Activated CD4-positive, alpha-beta memory T cell treated with anti-CD3 and anti-CD28 coated beads, Interleukin-2, amount 10 ng/mL, durations not matched to agents 7 days and 5 days (primary cell): ENCODE measurements at regions of chr5 and their contacts with region 1.

Region 1: DNA sequence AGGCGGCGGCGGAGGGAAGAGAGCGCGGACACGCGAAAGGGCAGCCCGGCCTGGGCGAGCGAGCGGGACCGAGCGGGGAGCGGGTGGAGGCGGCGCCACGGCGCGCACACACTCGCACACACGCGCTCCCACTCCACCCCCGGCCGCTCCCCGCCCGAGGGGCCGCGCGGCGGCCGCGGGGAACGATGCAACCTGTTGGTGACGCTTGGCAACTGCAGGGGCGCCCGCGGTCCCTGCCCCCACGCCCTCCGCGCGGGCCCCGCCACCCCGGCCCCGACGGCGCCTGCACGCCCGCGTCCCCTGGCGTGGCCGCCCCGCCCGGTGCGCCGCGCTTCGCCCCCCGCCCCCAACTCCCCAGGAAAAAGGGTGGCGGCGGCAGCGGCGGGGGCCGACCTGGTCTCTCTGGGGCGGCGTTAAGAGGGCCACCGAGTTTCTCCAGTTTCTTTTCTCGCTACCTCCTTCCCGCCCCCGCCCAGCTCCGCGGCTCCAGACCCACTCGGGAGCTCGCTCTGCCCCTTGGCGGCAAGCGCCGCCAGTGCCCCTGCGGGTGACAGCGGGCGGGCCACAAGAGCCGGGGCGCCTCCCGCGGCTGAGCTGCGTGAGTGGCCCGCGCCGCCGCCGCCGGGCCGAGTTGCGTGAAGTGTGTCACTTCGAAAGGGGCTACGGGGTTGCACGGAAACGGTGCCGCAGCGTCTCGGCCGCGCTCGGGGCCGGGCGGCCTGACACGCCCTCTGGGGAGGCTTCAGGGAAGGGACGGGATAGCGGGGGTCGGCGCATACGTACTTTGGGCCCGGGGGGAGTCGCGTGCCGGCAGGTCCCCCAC is at the start of gene NR3C1:
- DNase-seq: peak; percentile 87
- H3K4me3 Mint-ChIP-seq: peak within 1 kb of the TSS; percentile 78
- H3K27ac Mint-ChIP-seq: peak within 1 kb of the TSS; percentile 97
- H3K4me1 Mint-ChIP-seq: peaks cover 56% of the 10 kb centered on the region
- H3K27me3 Mint-ChIP-seq: no peaks in the 10 kb centered on the region
- total RNA-seq, gene NR3C1: 79.3 to 81.6 TPM

Region 2: DNA sequence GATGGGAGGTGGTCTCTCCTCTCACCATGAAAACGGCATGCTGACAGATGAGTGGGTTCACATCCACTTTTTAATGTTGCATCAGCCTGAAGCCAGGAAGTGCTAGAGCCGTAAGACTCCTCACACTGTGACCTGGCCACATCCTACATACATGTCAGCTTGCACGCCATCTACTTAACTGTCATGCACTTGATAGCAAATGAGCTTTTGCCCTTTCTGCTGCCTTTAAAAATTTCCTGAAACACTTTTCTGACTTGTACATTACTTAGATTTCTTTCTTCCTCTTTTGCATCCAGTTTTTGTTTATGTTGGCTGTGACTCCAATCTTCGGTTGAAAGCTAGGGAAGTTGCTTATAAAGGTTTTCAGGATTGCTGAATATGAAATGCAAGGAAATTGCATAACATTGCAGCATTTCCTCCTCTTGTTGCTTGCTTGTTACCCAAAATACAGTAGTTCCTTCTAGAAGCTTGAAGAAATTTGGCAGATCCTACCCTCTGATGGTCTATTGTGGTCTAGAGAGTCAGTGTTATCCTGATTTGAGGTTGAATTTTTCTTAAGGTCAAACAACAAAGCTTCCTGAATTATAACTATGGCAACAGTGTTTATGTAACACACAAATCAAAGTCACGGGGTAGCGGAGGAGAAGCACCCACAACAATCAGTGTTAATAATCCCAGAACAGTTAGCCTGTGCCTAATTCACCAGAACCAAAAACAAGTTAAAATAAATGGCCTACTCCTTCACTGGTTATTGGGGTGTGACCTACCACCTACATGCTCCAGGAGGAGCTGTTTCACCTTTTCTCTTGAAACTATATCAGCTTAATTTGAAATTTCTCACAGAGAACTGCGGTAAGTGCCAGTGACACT is 401.1 kb before region 1 on chr5:
- CTCF ChIA-PET with region 1: interaction called, 57 read pairs
- POLR2A ChIA-PET with region 1: interaction called, 80 read pairs
- DNase-seq: peak; percentile 81
- H3K4me3 Mint-ChIP-seq: peak overlapping the region; percentile 41
- H3K27ac Mint-ChIP-seq: peak overlapping the region; percentile 99
- H3K4me1 Mint-ChIP-seq: peaks cover 76% of the 10 kb centered on the region
- H3K27me3 Mint-ChIP-seq: no peaks in the 10 kb centered on the region

Region 3: DNA sequence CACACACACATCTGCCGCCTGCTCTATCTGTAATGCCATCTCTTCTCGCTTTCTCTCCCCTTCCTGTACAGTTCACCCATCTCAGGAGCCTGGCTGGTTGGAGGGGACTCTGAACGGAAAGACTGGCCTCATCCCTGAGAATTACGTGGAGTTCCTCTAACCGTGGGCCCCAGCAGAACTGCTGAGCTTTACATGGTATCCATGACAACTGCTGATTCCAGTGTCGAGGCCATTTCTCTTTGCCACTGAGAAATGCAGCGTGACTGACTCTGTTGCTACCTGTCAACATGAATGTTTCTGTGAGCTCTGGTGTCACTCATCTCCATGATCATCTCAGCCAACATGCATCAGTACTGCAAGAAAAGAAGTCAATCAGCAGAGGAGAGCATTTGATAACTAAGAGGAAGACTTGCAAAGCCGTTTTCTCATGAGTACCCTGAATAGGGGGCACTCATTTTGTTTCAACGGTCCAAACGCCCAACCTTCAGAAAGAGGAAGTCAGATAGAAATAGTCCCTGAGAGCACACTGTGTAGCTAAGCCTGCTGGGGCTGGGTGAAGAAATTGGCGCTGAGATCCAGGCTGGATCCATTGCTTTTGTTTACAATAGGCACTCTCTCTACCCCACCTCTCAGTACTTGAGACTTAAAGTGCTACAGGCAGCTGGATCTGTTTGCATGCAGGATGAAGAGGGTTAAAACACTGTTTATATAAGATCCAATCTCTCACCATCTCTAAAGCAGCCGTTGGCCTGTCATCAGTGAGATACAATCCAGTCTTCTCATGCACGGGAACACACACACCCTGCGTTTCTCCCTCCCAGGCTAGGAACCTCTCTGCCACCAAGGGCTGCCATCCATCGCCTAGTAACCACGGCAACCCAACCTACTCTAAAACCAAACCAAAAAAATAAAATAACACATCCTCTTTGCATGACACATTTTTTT is 181.2 kb before region 1 on chr5:
- CTCF ChIA-PET with region 1: interaction called, 4 read pairs
- POLR2A ChIA-PET with region 1: interaction called, 17 read pairs
- DNase-seq: peak; percentile 72
- H3K4me3 Mint-ChIP-seq: peak overlapping the region; percentile 27
- H3K27ac Mint-ChIP-seq: peak overlapping the region; percentile 83
- H3K4me1 Mint-ChIP-seq: peaks cover 60% of the 10 kb centered on the region
- H3K27me3 Mint-ChIP-seq: no peaks in the 10 kb centered on the region

Region 4: GRCh38 chr5:143345671-143346440 is 57.9 kb before region 1 on chr5:
- CTCF ChIA-PET with region 1: no interaction called
- POLR2A ChIA-PET with region 1: no interaction called
- DNase-seq: no peak
- H3K4me3 Mint-ChIP-seq: no peak overlapping the region
- H3K27ac Mint-ChIP-seq: no peak overlapping the region
- H3K4me1 Mint-ChIP-seq: peaks cover 28% of the 10 kb centered on the region
- H3K27me3 Mint-ChIP-seq: no peaks in the 10 kb centered on the region

Region 5: DNA sequence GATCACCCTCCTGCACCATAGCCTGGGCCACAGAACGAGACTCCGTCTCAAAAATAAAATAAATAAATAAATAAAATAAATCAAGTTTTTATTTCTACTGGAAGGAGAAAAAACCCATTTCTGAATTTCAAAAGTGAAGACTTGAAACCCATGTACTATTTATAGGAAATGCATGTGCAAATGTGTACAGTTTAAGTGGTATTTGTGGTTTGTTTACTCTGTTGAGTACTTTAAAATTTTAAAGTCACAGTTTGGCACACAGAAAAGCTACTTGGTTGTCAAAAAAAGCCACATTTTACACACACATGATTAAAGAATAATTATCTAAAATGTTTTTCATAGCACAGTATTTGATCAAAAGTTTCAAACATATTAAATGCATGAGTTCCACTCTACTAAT is 43.9 kb before region 1 on chr5:
- CTCF ChIA-PET with region 1: interaction called, 6 read pairs
- POLR2A ChIA-PET with region 1: interaction called, 13 read pairs
- DNase-seq: no peak
- H3K4me3 Mint-ChIP-seq: no peak overlapping the region
- H3K27ac Mint-ChIP-seq: no peak overlapping the region
- H3K4me1 Mint-ChIP-seq: peaks cover 37% of the 10 kb centered on the region
- H3K27me3 Mint-ChIP-seq: no peaks in the 10 kb centered on the region

Region 6: GRCh38 chr5:143435210-143435657 is 31.4 kb after region 1 on chr5:
- CTCF ChIA-PET with region 1: interaction called, 11 read pairs
- POLR2A ChIA-PET with region 1: interaction called, 35 read pairs
- DNase-seq: peak; percentile 33
- H3K4me3 Mint-ChIP-seq: peak overlapping the region; percentile 77
- H3K27ac Mint-ChIP-seq: peak overlapping the region; percentile 70
- H3K4me1 Mint-ChIP-seq: peaks cover 52% of the 10 kb centered on the region
- H3K27me3 Mint-ChIP-seq: peaks cover 2% of the 10 kb centered on the region

Region 7: GRCh38 chr5:143824851-143825720 is 421.3 kb after region 1 on chr5:
- CTCF ChIA-PET with region 1: interaction called, 17 read pairs
- POLR2A ChIA-PET with region 1: interaction called, 13 read pairs
- DNase-seq: peak; percentile 86
- H3K4me3 Mint-ChIP-seq: no peak overlapping the region
- H3K27ac Mint-ChIP-seq: no peak overlapping the region
- H3K4me1 Mint-ChIP-seq: peaks cover 20% of the 10 kb centered on the region
- H3K27me3 Mint-ChIP-seq: peaks cover 2% of the 10 kb centered on the region

Region 8: DNA sequence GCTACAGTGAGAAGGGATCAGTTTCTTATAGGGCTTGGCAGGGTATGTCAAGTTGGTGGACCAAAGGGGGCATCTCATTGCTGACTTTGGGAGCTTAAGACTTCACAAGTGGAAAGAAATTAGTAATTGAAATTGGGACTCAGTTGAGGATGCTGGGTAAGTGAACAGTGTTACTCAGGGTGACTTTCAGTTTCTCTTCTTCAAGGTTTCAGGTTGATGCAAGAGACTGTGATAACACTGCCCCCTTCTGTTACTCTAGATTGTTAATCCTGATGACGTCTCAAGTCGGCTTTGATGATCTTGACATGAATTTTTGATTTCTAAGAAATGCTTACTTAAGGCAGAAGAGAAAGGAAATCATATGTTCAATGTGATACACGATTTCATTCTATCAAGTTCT is 788.2 kb after region 1 on chr5:
- CTCF ChIA-PET with region 1: interaction called, 5 read pairs
- POLR2A ChIA-PET with region 1: interaction called, 14 read pairs
- DNase-seq: peak; percentile 28
- H3K4me3 Mint-ChIP-seq: no peak overlapping the region
- H3K27ac Mint-ChIP-seq: no peak overlapping the region
- H3K4me1 Mint-ChIP-seq: no peaks in the 10 kb centered on the region
- H3K27me3 Mint-ChIP-seq: peaks cover 3% of the 10 kb centered on the region